HCT116 (cell line): ENCODE measurements at regions of chr2 and their contacts with region 1.

Region 1: GRCh38 chr2:67840460-67841068 is 222.2 kb downstream of the C1D start:
- DNase-seq: peak; percentile 32
- ATAC-seq: peak; percentile 100
- H3K4me3 ChIP-seq: no peak overlapping the region
- H3K27ac ChIP-seq: no peak overlapping the region
- H3K4me1 ChIP-seq: no peaks in the 10 kb centered on the region
- H3K27me3 ChIP-seq: peaks cover 36% of the 10 kb centered on the region
- CTCF ChIP-seq: peak; percentile 48 to 79 (median 75); a peak in 5 of 6 replicates
- POLR2A ChIP-seq: no peak
- RAD21 ChIP-seq: peak; percentile 84

Region 2: DNA sequence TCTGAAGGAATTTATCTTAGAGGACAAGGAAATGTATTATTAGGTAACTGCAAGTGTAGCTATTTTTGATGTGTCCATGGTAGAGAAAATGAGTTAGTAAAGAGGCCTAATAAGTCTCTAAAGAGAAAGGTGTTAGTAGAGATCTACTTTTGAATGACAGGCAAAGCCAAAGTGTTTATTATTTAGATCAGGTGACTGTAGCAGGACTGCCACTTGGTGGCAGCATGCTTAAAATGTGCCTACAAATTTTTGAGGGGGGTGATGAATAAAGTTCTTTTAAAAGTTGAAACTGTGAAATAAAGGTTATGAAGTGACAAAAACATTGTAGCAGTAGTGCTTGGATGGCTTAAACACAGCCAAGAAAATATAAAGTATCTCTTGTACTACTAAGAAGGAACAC is 1827.1 kb before region 1 on chr2:
- CTCF ChIA-PET with region 1: interaction called, 3 read pairs
- POLR2A ChIA-PET with region 1: no interaction called
- RAD21 ChIA-PET with region 1: no interaction called
- intact Hi-C with region 1: loop called (anchors 5 kb)
- DNase-seq: no peak
- ATAC-seq: no peak
- H3K4me3 ChIP-seq: no peak overlapping the region
- H3K27ac ChIP-seq: no peak overlapping the region
- H3K4me1 ChIP-seq: no peaks in the 10 kb centered on the region
- H3K27me3 ChIP-seq: no peaks in the 10 kb centered on the region
- CTCF ChIP-seq: peak in 2 of 3 experiments; percentile 30 to 50; a peak in 3 of 6 replicates
- POLR2A ChIP-seq: no peak
- RAD21 ChIP-seq: 0 out of 2 replicates have a peak, but pooled peaks have one; percentile 27

Region 3: DNA sequence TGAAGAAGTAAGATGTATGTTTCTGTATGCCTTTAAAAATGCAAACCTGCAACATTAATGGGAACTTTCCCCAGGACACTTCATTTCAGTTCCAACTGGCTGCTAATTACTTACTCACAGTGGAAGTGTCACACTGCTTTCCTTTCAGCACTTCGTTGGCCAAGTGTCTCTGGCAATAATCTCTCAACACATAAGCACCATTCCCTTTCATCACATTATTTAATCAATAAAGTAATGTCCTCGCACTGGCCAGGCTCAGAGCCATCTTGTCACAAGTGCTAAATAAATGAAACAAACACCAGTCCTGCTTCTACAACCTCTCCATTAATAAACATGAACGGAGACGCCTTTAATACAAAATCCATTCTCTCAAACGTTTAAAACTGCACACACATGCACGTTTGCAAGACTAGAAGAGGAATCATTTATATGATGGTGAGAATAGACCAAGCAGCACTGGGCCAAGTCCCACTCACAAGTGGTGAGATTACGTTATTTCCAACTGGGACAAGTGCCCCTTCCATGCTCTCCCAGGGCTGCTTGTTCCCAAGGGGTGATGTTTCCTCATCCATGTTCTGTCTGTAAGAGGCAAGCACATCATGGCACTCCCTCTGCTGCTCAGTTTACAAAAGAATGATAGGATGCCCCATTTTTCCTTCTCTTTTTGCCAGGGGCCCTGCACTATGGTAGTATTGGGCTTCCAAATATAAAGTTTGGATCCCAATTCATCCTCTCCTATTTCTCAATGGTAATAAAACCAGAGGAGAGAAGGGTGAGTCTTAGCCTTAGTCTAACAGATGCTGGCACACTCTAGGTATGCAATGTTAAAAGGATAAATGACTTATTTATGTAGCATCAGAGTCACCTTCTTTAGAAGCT is 500.2 kb before region 1 on chr2:
- CTCF ChIA-PET with region 1: no interaction called
- POLR2A ChIA-PET with region 1: no interaction called
- RAD21 ChIA-PET with region 1: no interaction called
- intact Hi-C with region 1: no loop called
- DNase-seq: no peak
- ATAC-seq: no peak
- H3K4me3 ChIP-seq: no peak overlapping the region
- H3K27ac ChIP-seq: no peak overlapping the region
- H3K4me1 ChIP-seq: no peaks in the 10 kb centered on the region
- H3K27me3 ChIP-seq: peaks cover 4% of the 10 kb centered on the region; the same call in 1 of the 2 replicates
- CTCF ChIP-seq: no peak
- POLR2A ChIP-seq: no peak
- RAD21 ChIP-seq: no peak

Region 4: GRCh38 chr2:67476809-67477790 is 363.5 kb before region 1 on chr2:
- CTCF ChIA-PET with region 1: no interaction called
- POLR2A ChIA-PET with region 1: no interaction called
- RAD21 ChIA-PET with region 1: no interaction called
- intact Hi-C with region 1: loop called (anchors 5 kb)
- DNase-seq: peak; percentile 12
- ATAC-seq: peak; percentile 73
- H3K4me3 ChIP-seq: no peak overlapping the region
- H3K27ac ChIP-seq: no peak overlapping the region
- H3K4me1 ChIP-seq: no peaks in the 10 kb centered on the region
- H3K27me3 ChIP-seq: no peaks in the 10 kb centered on the region; the same call in 1 of the 2 replicates
- CTCF ChIP-seq: peak; percentile 29 to 54 (median 38); a peak in 4 of 6 replicates
- POLR2A ChIP-seq: no peak
- RAD21 ChIP-seq: peak; percentile 66

Region 5: DNA sequence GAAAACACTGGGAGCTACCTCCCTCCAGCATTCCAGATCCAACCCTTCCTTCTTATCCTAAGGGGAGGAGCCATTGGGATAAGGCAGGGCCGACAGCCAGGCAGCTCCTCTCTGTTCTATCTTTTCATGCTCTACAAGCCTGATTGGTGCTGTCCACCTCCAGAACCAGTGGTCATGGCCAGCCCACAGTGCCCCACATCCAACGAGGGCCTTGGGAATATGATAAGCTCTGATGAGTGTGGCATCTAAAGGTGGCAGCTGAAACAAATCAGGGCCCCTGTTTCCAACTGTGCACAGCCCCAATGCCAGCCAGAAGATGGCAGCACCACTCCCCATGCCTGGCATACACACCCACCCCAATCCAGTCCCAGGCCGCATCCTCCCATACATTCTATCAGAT is 107.0 kb before region 1 on chr2:
- CTCF ChIA-PET with region 1: interaction called, 16 read pairs
- POLR2A ChIA-PET with region 1: no interaction called
- RAD21 ChIA-PET with region 1: no interaction called
- intact Hi-C with region 1: loop called (anchors 1 kb)
- DNase-seq: peak; percentile 12
- ATAC-seq: peak; percentile 97
- H3K4me3 ChIP-seq: no peak overlapping the region
- H3K27ac ChIP-seq: no peak overlapping the region
- H3K4me1 ChIP-seq: no peaks in the 10 kb centered on the region
- H3K27me3 ChIP-seq: peaks cover 21% of the 10 kb centered on the region
- CTCF ChIP-seq: peak; percentile 20 to 49 (median 36); a peak in 4 of 6 replicates
- POLR2A ChIP-seq: no peak
- RAD21 ChIP-seq: peak; percentile 36

Region 6: DNA sequence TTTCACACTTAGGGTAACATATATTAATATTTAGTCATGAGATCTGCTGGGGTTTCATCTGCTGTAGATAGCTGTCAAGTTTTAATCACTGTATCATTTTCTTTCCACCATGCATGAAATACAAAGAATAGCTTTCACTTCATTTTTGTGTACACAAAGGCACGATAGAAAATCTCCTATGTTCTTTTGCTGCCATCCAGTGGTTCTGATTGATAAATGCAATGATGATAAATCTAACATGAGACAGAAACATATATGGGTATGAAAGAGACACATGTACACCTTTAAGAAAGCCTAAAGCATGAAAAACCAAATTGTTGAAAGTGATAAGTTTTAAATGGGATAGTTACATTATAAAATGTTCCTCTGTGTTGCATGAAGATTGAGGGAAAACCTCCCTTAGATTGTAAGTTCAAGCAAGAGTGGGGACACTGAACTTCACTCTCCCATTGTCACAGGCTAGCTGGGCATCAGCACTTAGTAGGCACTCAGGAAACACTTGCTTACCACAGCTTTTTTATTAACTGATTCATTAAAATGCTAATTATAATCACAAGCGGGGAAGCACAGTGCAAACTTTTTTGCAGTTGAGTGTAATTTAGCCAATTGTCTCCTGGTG is 191.1 kb after region 1 on chr2:
- CTCF ChIA-PET with region 1: interaction called, 10 read pairs
- POLR2A ChIA-PET with region 1: no interaction called
- RAD21 ChIA-PET with region 1: no interaction called
- intact Hi-C with region 1: no loop called
- DNase-seq: peak; percentile 32
- ATAC-seq: peak; percentile 77
- H3K4me3 ChIP-seq: no peak overlapping the region
- H3K27ac ChIP-seq: no peak overlapping the region
- H3K4me1 ChIP-seq: no peaks in the 10 kb centered on the region
- H3K27me3 ChIP-seq: peaks cover 5% of the 10 kb centered on the region; the same call in 1 of the 2 replicates
- CTCF ChIP-seq: peak; percentile 39 to 73 (median 53); a peak in 5 of 6 replicates
- POLR2A ChIP-seq: no peak
- RAD21 ChIP-seq: peak; percentile 84